ENCODE measurements at regions of chr1 and their contacts with region 1.

Region 1: DNA sequence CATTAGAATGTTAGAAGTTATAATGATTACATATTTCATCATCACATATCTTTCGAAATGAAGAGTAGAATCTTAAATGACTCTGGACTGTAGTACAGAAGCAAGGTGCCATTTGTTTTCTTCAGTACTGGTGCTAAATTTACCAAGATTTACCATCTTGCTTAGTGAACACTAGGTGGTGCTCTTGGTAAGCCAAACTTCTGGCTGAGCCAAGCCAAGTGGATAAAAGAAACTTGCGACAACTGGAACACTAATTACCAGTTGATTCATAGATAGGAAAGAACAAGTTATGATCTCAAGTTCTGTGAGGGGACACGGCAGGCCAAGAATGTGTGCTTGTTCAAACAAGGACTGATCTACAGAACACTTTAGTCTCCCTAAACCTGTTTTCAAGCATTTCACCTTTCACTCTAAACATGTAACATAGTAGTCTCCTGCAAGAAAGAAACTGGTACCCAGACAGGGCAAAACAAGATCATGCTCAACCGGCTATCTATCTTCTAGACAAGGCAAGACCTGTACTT is 19.8 kb downstream of the SPRTN start:
- DNase-seq: peak; percentile 74

Region 2: DNA sequence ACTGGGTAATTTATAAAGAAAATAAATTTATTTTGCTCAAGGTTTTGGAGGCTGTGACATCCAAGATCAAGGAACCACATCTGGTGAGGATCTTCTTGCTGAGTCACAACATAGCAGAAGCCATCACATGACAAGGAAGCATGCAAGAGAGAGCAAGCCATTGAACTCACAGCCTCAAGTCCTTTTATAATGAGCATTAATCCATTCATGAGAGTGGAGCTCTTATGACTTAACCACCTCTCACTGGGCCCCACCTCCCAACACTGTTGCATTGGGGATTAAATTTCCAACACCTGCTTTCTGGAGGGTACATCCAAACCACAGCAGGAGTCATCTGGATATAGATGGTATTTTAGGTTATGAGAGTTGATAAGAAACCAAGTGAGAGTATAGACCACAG is 84.8 kb after region 1 on chr1:
- in situ Hi-C with region 1: no loop called
- DNase-seq: no peak

Region 3: DNA sequence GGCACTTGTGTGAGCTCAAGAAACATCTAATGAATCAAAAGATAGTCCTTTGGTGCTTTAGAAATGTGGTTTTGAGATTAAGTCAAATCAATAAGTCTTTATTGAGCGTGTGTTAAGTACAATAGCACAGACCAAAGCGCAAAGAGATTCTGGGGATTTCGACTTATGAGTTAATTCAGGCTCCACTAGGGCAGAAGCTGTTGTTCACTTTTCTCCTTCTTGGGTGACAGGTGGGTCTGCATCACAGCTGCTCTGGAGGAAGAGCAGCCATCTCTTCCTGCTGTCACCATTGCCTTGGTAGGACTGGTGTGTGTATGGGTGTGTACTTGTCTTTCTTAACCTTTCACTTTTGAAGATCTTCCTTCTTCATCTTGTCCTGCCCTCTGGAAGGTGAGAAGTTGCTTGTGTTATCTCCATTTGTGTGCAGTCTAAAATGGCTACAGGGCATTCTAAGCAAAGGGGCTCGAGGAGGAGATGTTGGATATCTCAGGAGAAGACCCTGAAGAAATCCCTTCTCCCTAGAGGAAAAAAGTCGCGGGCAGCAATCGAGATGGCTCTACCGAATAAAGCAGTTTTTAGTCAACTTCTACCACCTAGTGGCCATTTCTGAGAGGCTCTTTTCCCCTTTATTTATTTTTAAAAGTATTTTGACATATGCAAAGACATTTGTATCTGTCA is 245.8 kb after region 1 on chr1:
- in situ Hi-C with region 1: loop called (anchors 25 kb)
- DNase-seq: peak; percentile 78

Measured in SK-MEL-5 (cell line).